OCI-LY7 (cell line): ENCODE measurements at regions of chr17 and their contacts with region 1.

Region 1: GRCh38 chr17:40139566-40140058 is 725 bp upstream of the CASC3 start:
- DNase-seq: no peak
- H3K4me3 ChIP-seq: peak overlapping the region; percentile 75
- H3K27ac ChIP-seq: peak overlapping the region; percentile 78
- H3K4me1 ChIP-seq: peaks cover 21% of the 10 kb centered on the region
- CTCF ChIP-seq: no peak

Region 2: GRCh38 chr17:40121181-40122135 is 18.2 kb before region 1 on chr17 and contains the start of gene MSL1:
- CTCF ChIA-PET with region 1: interaction called, 5 read pairs
- POLR2A ChIA-PET with region 1: interaction called, 13 read pairs
- intact Hi-C with region 1: loop called (anchors 1 kb)
- DNase-seq: peak; percentile 80
- H3K4me3 ChIP-seq: peak within 1 kb of the TSS; percentile 88
- H3K27ac ChIP-seq: peak within 1 kb of the TSS; percentile 65
- H3K4me1 ChIP-seq: peaks cover 26% of the 10 kb centered on the region
- CTCF ChIP-seq: no peak
- total RNA-seq, gene MSL1: 67.2 and 95.4 TPM in 2 replicates

Region 3: GRCh38 chr17:40551879-40552768 is 412.5 kb after region 1 on chr17:
- CTCF ChIA-PET with region 1: no interaction called
- POLR2A ChIA-PET with region 1: no interaction called
- intact Hi-C with region 1: no loop called
- DNase-seq: no peak
- H3K4me3 ChIP-seq: no peak overlapping the region
- H3K27ac ChIP-seq: no peak overlapping the region
- H3K4me1 ChIP-seq: peaks cover 40% of the 10 kb centered on the region
- CTCF ChIP-seq: no peak